Testis (tissue), 5 donors: ENCODE measurements at regions of chr6 and their contacts with region 1.

Region 1: GRCh38 chr6:105097288-105097687 is 82.5 kb downstream of the POPDC3 start:
- DNase-seq: no peak
- H3K4me3 ChIP-seq: no peak overlapping the region
- H3K27ac ChIP-seq: no peak overlapping the region
- H3K4me1 ChIP-seq: no peaks in the 10 kb centered on the region
- H3K27me3 ChIP-seq: no peaks in the 10 kb centered on the region
- CTCF ChIP-seq: no peak
- POLR2A ChIP-seq: no peak

Region 2: GRCh38 chr6:104754788-104755409 is 342.4 kb before region 1 on chr6:
- intact Hi-C with region 1: no loop called
- DNase-seq: no peak
- H3K4me3 ChIP-seq: no peak overlapping the region
- H3K27ac ChIP-seq: no peak overlapping the region
- H3K4me1 ChIP-seq: no peaks in the 10 kb centered on the region
- H3K27me3 ChIP-seq: no peaks in the 10 kb centered on the region
- CTCF ChIP-seq: no peak
- POLR2A ChIP-seq: no peak

Region 3: GRCh38 chr6:105402939-105403935 is 305.9 kb after region 1 on chr6 and contains the start of gene PREP:
- intact Hi-C with region 1: loop called (anchors 10 kb)
- DNase-seq: peak; percentile 84
- H3K4me3 ChIP-seq: peak within 1 kb of the TSS; percentile 93 to 94
- H3K27ac ChIP-seq: peak within 1 kb of the TSS; percentile 82 to 87
- H3K4me1 ChIP-seq: peaks cover 13% of the 10 kb centered on the region
- H3K27me3 ChIP-seq: no peaks in the 10 kb centered on the region
- CTCF ChIP-seq: peak; percentile 76 to 80 (median 79)
- POLR2A ChIP-seq: no peak
- total RNA-seq, gene PREP: 56.4 to 66.6 TPM